ENCODE measurements at regions of chr3 and their contacts with region 1.

Region 1: DNA sequence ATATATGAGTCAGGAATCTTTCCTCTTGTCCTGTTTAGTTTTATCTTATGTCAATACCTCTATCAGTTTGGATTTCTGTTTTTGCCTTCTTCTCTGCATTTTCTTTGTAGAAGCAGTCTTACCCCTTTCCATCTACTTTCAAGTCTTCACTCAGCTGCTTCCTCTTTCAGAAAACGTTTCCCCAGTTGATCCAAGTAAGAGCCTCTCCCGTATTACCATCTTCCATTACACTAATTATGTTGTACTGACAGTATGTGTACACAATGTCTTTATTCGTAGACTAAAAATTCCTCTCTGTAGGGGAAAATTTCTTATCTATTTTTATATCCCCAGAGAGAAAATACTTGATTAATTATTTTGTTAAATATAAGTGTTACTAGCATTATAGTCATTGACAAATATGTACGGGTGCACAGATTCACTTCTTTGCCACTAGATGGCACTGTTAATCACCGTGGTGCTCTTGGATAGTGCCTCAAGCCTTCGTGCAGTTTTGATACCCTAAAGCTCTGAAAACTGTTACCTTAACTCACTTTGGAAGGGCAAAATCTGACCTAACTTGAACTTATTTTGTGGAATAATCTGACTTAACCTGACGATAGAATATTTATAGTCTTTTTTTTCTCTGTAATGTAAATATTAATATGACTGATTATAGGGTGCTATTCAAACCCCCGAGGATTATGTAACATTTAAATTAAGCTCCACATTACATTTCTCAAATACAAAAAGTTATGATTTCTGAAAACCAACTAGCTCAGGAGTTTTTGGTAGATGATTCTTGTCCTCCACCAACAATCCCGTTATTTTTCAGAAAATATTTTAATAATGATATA is 74.2 kb upstream of the POU1F1 start:
- DNase-seq: no peak
- ATAC-seq: peak; percentile 57

Region 2: GRCh38 chr3:88003115-88003755 is 652.7 kb after region 1 on chr3:
- intact Hi-C with region 1: loop called (anchors 5 kb)
- DNase-seq: no peak
- ATAC-seq: no peak

Measured in Right ventricle myocardium inferior (tissue), 1 donor.